HepG2 (cell line): ENCODE measurements at regions of chr12 and their contacts with region 1.

Region 1: DNA sequence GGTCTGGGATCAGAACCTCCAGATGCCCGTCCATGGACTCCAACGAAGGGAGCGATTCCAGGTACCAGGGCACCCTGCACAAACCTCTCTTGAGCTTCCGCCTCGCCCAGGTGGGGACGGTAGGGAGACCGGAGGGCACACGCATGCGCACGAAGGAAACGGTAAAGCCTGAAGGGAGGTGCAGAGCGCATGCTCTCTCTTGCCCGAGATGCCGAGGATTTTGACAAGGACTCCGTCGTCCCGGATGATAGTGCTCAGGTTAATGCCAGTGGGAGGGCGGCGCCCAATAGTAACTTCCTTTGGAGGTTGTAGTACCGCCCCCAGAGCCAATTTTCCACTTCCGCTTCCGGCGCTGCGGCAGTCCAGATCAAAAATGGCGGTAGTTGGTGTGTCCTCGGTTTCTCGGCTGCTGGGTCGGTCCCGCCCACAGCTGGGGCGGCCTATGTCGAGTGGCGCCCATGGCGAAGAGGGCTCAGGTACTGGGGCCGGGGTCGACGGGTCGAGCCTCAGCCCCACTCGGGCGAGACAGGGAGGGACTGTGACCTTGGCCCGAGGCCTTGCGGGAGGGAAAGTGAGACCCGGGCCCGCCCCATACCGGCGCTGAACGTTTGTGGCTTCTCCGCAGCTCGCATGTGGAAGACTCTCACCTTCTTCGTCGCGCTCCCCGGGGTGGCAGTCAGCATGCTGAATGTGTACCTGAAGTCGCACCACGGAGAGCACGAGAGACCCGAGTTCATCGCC is at the start of gene COX6A1:
- DNase-seq: peak; percentile 99
- ATAC-seq: peak; percentile 97
- H3K4me3 ChIP-seq: peak within 1 kb of the TSS; percentile 85 to 96 (median 90)
- H3K27ac ChIP-seq: peak within 1 kb of the TSS; percentile 52
- H3K4me1 ChIP-seq: peaks cover 31% of the 10 kb centered on the region
- H3K27me3 ChIP-seq: no peaks in the 10 kb centered on the region; a peak in 1 of 5 replicates
- CTCF ChIP-seq: peak; percentile 38
- EP300 ChIP-seq: no peak
- POLR2A ChIP-seq: peak; percentile 71 to 85
- RAD21 ChIP-seq: no peak; the same call in 1 of the 2 replicates
- total RNA-seq, gene COX6A1: 204 and 542 TPM in 2 replicates

Region 2: GRCh38 chr12:119780786-119781434 is 657.0 kb before region 1 on chr12:
- CTCF ChIA-PET with region 1: no interaction called
- POLR2A ChIA-PET with region 1: no interaction called
- in situ Hi-C with region 1: no loop called
- intact Hi-C with region 1: no loop called
- DNase-seq: peak; percentile 37
- ATAC-seq: peak; percentile 46; the same call in 2 of the 3 replicates
- H3K4me3 ChIP-seq: no peak overlapping the region
- H3K27ac ChIP-seq: no peak overlapping the region
- H3K4me1 ChIP-seq: no peaks in the 10 kb centered on the region
- H3K27me3 ChIP-seq: no peaks in the 10 kb centered on the region
- CTCF ChIP-seq: peak; percentile 77
- EP300 ChIP-seq: no peak
- POLR2A ChIP-seq: no peak
- RAD21 ChIP-seq: peak; percentile 35; the same call in 1 of the 2 replicates

Region 3: DNA sequence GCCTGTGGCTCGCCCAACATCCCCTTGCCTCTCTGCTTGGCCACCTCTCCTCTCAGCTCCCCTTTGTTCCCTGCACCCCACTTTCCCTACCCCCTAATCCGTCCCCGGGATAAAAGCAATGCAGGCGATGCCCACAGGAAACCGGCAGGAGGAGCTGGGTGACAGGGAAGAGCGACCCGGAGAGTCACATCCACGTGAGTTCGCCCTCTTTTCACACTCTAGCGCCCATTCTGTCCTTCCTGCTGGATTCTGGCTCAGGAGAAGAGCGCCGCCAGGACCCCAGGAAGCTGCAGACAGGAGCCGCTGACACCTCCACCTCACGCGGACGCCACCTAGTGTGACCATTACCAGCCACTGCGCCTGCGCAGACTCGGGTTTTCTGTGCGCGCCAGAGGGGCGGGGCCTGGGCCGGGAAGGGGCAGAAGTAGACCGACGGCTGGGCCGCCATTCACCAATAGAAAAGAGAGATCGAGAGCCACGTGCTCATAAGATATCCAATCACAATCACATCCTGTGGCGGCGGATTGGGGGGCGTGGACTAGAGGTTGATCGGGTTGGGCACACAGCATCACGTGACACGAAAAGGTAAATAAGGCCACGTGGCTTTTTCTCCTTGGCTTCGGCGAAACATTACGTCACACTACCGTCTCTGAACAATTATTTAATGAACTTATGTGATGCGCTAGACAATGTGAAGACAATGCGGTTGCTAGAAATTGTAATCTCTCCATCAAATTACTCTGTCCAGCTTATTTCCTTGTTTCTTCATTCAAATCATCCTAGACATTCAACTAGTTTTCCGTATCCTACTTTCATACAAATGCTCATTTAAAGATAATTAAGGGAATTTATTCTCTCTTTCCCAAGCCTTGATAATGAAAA is 120.5 kb before region 1 on chr12:
- CTCF ChIA-PET with region 1: no interaction called
- POLR2A ChIA-PET with region 1: interaction called, 4 read pairs
- in situ Hi-C with region 1: loop called (anchors 10 kb)
- intact Hi-C with region 1: loop called (anchors 10 kb)
- DNase-seq: peak; percentile 99
- ATAC-seq: peak; percentile 89
- H3K4me3 ChIP-seq: peak overlapping the region; percentile 70 to 82 (median 70)
- H3K27ac ChIP-seq: peak overlapping the region; percentile 90
- H3K4me1 ChIP-seq: peaks cover 34% of the 10 kb centered on the region
- H3K27me3 ChIP-seq: no peaks in the 10 kb centered on the region; a peak in 1 of 5 replicates
- CTCF ChIP-seq: peak; percentile 81
- EP300 ChIP-seq: peak in 1 of 2 experiments; percentile 23; a peak in 1 of 4 replicates
- POLR2A ChIP-seq: peak; percentile 84 to 90
- RAD21 ChIP-seq: 0 out of 2 replicates have a peak, but pooled peaks have one; percentile 30

Region 4: DNA sequence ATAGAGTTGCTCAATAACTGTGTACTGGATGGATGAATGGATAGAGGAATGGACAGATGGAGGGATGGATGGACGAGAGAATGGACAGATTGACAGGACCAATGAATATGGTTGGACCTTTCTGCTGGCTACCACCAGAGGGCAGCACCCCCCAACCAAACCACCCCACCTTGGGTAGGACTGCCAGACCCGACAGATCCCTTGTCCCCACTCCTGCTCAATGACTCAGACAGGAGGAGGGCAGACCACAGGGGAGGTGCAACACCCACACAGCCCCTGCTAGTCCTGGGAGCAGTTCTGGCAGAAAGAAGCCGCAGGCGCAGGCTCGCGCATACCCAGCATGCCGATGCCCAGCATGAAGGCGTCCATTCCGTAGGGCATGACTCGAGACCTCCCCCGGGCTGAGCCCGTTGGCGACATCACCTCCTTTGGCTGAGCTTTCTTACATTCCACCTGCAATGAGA is 81.3 kb before region 1 on chr12:
- CTCF ChIA-PET with region 1: interaction called, 3 read pairs
- POLR2A ChIA-PET with region 1: no interaction called
- in situ Hi-C with region 1: loop called (anchors 5 kb)
- intact Hi-C with region 1: no loop called
- DNase-seq: peak; percentile 56
- ATAC-seq: peak; percentile 92
- H3K4me3 ChIP-seq: no peak overlapping the region
- H3K27ac ChIP-seq: no peak overlapping the region
- H3K4me1 ChIP-seq: no peaks in the 10 kb centered on the region
- H3K27me3 ChIP-seq: no peaks in the 10 kb centered on the region; a peak in 1 of 5 replicates
- CTCF ChIP-seq: peak; percentile 95
- EP300 ChIP-seq: no peak
- POLR2A ChIP-seq: no peak
- RAD21 ChIP-seq: peak; percentile 91

Region 5: GRCh38 chr12:120488057-120488640 is 50.2 kb after region 1 on chr12:
- CTCF ChIA-PET with region 1: no interaction called
- POLR2A ChIA-PET with region 1: no interaction called
- in situ Hi-C with region 1: no loop called
- intact Hi-C with region 1: no loop called
- DNase-seq: no peak
- ATAC-seq: no peak
- H3K4me3 ChIP-seq: no peak overlapping the region
- H3K27ac ChIP-seq: no peak overlapping the region
- H3K4me1 ChIP-seq: no peaks in the 10 kb centered on the region
- H3K27me3 ChIP-seq: no peaks in the 10 kb centered on the region
- CTCF ChIP-seq: no peak
- EP300 ChIP-seq: no peak
- POLR2A ChIP-seq: no peak
- RAD21 ChIP-seq: no peak